Dorsolateral prefrontal cortex (tissue), 120 donors: ENCODE measurements at regions of chr16 and their contacts with region 1.

Region 1: GRCh38 chr16:86563489-86564345 is 2.9 kb upstream of the FOXC2 start:
- DNase-seq: peak; percentile 80 to 95 (median 88)
- H3K4me3 ChIP-seq: peak overlapping the region in 33 of 59 donors; percentile 0 to 52 (median 19)
- H3K27ac ChIP-seq: peak overlapping the region in 9 of 59 donors; percentile 5 to 61 (median 19)
- H3K27me3 ChIP-seq: peaks cover 9 to 68% (median 49%) of the 10 kb centered on the region in 45 donors
- CTCF ChIP-seq: peak; percentile 98 to 100 (median 100)

Region 2: DNA sequence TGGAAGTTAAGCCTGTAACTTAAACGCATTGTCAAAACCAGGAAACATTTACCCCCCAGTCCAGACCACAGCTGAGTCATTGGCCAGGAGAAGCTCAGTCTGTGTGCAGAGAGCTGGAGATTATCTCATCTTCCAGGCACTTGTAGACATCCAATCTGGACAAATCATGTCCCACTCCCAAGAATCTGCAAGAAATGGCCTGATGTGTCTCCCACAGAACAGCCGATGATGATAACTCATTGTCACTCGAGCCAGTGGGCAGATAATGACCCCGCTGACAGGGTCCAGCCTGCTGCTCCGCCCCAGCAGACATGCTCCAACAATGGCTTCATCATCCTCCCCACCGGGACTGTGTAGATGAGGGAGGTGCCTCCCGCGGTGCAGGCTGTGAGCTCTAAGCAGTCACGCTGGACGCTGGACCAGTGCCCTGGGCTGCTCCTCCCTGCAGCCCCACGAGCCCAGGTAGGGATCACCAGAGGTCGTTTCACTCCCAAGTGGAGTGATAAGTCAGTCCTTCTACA is 431.0 kb after region 1 on chr16:
- intact Hi-C with region 1: no loop called
- DNase-seq: no peak
- H3K4me3 ChIP-seq: no peak overlapping the region
- H3K27ac ChIP-seq: no peak overlapping the region
- H3K27me3 ChIP-seq: peaks cover 0 to 42% (median 12%) of the 10 kb centered on the region in 45 donors
- CTCF ChIP-seq: no peak

Region 3: DNA sequence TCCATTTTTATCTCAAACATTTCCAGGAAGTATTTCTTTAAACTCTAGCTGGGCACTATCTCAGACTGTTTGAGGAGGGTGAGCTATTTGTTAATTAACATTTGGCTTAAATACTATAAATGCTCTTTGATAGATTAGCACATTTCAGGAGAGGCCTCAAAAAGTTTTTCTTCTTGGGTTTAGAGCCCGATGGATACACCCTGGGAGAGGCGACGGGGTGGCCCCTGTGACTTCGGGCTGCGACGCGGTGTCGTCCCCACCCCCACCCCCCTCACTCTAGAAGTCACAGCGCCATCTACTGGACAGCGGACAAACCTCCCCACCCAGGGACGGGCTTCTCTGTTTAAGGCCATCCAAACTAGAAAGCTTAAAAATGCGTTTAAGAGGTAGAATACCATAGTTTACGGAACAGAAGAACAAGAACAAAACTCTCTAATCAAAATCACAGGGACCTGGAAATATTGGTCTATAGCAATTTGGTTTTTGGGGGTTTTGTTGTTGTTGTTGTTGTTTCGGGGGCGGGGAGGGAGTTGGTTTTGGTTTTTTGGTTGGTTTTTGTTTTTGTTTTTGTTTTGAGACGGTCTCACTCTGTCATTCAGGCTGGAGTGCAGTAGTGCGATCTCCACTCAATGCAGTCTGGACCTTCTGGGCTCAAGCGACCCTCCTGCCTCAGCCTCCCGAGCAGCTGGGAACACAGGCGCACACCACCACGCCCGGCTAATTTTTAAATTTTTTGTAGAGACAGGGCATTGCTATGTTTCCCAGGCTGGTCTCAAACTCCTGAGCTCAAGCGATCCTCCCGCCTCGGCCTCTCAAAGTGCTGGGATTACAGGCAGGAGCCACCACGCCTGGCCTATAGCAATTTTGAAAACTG is 499.1 kb after region 1 on chr16:
- intact Hi-C with region 1: loop called (anchors 1 to 2 kb)
- DNase-seq: peak in 4 of 10 donors; percentile 26 to 61 (median 51)
- H3K4me3 ChIP-seq: peak overlapping the region in 18 of 59 donors; percentile 7 to 45 (median 22)
- H3K27ac ChIP-seq: peak overlapping the region in 2 of 59 donors; percentile 2 to 42
- H3K27me3 ChIP-seq: peaks cover 0 to 11% (median 0%) of the 10 kb centered on the region in 45 donors
- CTCF ChIP-seq: peak; percentile 37 to 88 (median 78)

Region 4: DNA sequence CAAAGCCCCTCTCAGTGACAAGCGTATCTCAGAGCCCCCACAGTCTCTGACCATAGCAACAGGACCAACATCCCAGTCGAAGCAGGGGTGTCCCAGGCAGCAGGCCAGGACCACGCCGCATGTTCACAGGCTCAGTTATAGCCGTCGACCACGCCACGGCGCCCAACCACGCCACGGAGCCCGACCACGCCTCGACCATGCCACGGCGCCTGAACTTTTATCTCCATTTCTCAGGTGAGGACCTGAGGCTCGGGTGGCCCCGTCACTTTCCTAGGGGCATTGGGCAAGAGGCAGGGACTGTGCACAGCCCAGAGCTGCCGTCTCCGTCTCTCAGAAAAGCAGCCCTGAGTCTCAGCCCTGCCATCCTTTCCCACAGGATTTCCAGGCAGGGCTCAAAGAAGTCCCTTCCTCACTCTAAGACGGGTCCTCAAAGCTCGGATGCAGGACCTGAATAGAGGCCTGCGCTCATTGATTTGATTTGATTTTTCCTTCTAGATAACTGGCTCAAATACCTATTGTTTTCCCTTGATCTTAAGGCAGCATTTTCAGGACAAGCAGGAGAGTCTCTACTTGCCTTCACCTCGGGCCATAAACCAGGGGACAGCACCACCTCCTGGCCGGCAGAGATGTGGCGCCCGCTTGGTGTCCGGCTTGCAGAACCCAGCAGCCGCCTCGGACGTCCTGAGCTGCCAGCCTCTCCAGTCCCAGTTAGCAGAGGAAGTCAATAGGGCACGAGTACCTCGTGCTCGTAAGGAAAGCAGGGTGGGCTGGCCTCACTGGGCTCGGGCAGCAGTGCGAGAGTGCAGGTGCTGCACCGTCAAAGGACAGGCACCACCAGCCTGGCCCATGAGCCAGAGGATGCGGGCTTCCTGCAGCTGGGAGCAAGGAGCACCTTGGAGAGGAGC is 714.7 kb after region 1 on chr16:
- intact Hi-C with region 1: loop called (anchors 1 to 5 kb)
- DNase-seq: peak; percentile 61 to 91 (median 73)
- H3K4me3 ChIP-seq: no peak overlapping the region
- H3K27ac ChIP-seq: no peak overlapping the region
- H3K27me3 ChIP-seq: peaks cover 0 to 12% (median 0%) of the 10 kb centered on the region in 45 donors
- CTCF ChIP-seq: peak; percentile 59 to 94 (median 86)

Region 5: GRCh38 chr16:87297918-87298631 is 734.4 kb after region 1 on chr16:
- intact Hi-C with region 1: loop called (anchors 5 kb)
- DNase-seq: peak in 2 of 10 donors; percentile 23 to 46
- H3K4me3 ChIP-seq: no peak overlapping the region
- H3K27ac ChIP-seq: no peak overlapping the region
- H3K27me3 ChIP-seq: no peaks in the 10 kb centered on the region
- CTCF ChIP-seq: peak in 55 of 56 donors; percentile 35 to 71 (median 56)

Region 6: DNA sequence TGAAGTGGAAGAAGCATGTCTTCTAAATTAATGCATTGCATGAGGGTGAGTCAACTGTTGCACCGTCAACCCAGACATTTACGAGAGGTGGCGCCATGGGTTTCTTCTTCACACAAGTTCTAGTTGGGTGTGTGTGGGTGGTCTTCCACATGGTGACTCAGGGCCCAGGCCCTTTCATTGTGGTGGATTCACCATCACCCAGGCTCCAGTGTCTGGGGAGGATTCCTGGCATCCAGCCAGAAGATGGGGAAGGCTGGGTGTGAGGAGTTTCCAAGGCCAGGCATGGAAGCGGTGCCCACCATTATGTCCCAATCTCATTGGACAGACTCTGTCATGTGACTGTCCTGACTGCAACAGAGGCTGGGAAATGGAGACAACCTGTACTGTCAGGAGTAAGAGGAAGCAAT is 1017.1 kb after region 1 on chr16:
- intact Hi-C with region 1: no loop called
- DNase-seq: no peak
- H3K4me3 ChIP-seq: no peak overlapping the region
- H3K27ac ChIP-seq: peak overlapping the region in 1 of 59 donors; percentile 89
- H3K27me3 ChIP-seq: peaks cover 0 to 34% (median 0%) of the 10 kb centered on the region in 45 donors
- CTCF ChIP-seq: no peak